WTC11 (cell line): ENCODE measurements at regions of chr14 and their contacts with region 1.

Region 1: GRCh38 chr14:54566410-54567223 is at the start of gene SAMD4A:
- DNase-seq: peak; percentile 65
- ATAC-seq: peak; percentile 13
- H3K4me3 Mint-ChIP-seq: peak within 1 kb of the TSS; percentile 94
- H3K27ac Mint-ChIP-seq: 0 out of 2 replicates have a peak within 1 kb of the TSS, but pooled peaks have one; percentile 70
- H3K4me1 Mint-ChIP-seq: peaks cover 21% of the 10 kb centered on the region
- H3K27me3 Mint-ChIP-seq: peaks cover 36% of the 10 kb centered on the region
- CTCF ChIP-seq: no peak
- total RNA-seq, gene SAMD4A: 5.2 to 6.0 TPM (median 5.3 TPM) in 3 replicates

Region 2: GRCh38 chr14:54509546-54510501 is 56.8 kb before region 1 on chr14 and contains the start of gene CGRRF1:
- CTCF ChIA-PET with region 1: interaction called, 21 read pairs
- POLR2A ChIA-PET with region 1: interaction called, 3 read pairs
- DNase-seq: peak; percentile 98
- ATAC-seq: peak; percentile 99
- H3K4me3 Mint-ChIP-seq: peak within 1 kb of the TSS; percentile 98
- H3K27ac Mint-ChIP-seq: peak within 1 kb of the TSS; percentile 94
- H3K4me1 Mint-ChIP-seq: peaks cover 13% of the 10 kb centered on the region
- H3K27me3 Mint-ChIP-seq: peaks cover 6% of the 10 kb centered on the region
- CTCF ChIP-seq: peak; percentile 77
- total RNA-seq, gene CGRRF1: 13.0 to 17.5 TPM (median 15.1 TPM) in 3 replicates

Region 3: DNA sequence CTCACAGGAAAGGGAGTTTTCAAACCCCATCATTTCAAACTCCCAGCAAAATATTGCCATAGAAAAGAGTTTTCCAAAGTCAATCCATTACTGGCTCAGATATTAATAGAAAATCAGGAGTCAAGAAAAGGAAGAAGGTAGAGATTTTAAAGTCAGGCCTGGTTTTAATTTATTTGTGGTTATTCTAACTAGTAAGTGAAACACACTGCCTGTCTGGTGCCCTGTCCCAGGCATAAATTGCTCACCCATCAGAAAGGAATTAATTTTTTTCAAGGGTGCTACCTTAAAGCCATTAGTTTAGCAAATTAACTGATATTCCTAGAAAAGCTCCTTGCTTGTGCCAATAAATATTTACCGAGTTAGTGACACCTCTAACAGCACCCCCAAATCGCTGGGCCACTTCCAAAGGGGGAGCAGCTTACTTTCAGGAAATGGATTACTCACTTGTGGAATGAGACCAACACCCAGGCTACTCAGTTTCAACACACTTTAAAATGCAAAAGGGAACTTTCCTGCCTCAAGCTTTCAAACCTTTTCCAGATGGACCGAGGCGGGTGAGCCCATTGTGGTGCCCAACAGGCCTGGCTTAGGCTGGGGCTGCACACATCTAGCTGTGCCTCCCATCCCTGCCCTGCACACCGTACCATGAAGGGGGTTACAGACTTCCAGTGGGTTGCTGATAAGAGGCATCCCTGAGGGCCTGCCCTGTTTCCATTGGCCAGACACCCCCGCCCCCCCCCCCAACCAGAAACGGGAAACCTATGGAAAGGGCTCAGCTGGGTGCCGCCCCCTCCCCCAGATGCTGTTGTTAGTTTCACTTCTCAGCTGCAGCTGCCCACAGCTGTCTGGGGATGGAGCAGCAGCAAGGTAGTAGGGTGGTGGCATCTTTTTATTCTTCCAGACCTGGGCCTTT is 117.5 kb after region 1 on chr14:
- CTCF ChIA-PET with region 1: interaction called, 4 read pairs
- POLR2A ChIA-PET with region 1: interaction called, 10 read pairs
- DNase-seq: peak; percentile 69
- ATAC-seq: peak; percentile 88
- H3K4me3 Mint-ChIP-seq: peak overlapping the region; percentile 50
- H3K27ac Mint-ChIP-seq: peak overlapping the region; percentile 81
- H3K4me1 Mint-ChIP-seq: peaks cover 36% of the 10 kb centered on the region
- H3K27me3 Mint-ChIP-seq: no peaks in the 10 kb centered on the region
- CTCF ChIP-seq: no peak

Region 4: DNA sequence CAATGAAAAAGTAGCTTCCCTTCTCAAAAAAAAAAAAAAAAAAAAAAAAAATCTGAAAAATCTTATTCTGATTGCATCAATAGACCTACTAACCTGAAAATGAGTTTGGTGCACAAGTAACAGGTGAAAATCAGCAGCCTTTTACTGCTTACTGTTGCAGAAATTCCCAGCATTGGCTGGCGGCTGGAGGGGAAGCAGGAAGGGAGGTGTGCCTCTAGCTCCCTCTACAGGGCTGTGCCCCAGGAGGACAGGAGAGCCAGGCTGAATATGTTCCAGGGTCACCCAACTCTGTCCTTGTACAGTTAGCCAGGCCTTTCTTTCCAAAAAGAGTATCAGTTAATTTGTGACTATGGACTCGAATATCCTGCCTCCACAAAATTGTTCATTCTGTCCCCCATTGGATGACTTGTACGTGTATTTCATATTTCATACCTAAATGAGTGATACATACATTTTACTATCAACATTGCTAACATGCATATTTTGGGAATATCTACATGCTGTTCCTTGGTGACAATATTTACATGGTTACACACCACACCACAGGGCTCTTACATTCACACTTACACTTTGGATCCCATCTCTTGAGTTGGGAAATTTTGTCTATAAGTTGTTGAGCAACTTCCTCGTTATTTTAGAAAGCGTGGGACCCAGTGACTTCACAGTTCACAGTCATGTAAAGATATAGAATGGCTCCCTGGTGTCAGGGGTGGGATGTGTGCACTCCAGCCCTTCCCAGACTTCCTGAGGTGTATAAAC is 125.1 kb after region 1 on chr14:
- CTCF ChIA-PET with region 1: interaction called, 37 read pairs
- POLR2A ChIA-PET with region 1: interaction called, 5 read pairs
- DNase-seq: peak; percentile 84
- ATAC-seq: peak; percentile 96
- H3K4me3 Mint-ChIP-seq: no peak overlapping the region
- H3K27ac Mint-ChIP-seq: no peak overlapping the region
- H3K4me1 Mint-ChIP-seq: peaks cover 7% of the 10 kb centered on the region
- H3K27me3 Mint-ChIP-seq: no peaks in the 10 kb centered on the region
- CTCF ChIP-seq: peak; percentile 58

Region 5: DNA sequence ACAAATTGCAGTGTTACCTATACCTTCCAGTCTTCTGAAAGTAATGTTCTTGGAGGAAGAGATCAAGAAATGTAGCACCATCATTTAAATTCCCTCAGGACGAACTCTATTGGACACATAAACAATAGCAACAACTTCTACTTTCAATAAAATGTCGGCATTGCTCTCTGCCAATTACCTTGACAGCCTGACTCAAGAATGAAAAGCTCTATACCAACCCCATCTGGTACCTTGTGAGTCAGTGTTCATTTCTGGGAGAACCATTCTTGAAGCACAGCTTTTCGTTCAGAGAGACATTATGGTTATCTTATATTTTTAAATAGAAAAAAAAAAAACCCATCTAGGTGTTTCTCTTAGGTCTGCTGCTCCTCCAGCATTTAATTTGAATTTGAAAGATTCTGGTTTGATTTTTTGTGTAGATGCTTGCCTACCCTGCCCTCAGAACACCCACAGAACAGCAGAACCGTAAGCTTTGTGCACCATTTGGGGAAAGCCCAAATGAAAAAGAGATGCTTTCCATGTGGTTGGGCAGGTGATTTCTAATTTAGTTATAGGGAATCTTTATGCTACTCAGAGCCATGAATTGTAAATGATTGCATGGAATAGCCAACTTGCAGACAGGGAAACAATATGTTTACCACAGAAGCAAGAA is 156.3 kb after region 1 on chr14:
- CTCF ChIA-PET with region 1: interaction called, 14 read pairs
- POLR2A ChIA-PET with region 1: interaction called, 5 read pairs
- DNase-seq: no peak
- ATAC-seq: peak; percentile 77
- H3K4me3 Mint-ChIP-seq: no peak overlapping the region
- H3K27ac Mint-ChIP-seq: no peak overlapping the region
- H3K4me1 Mint-ChIP-seq: peaks cover 8% of the 10 kb centered on the region
- H3K27me3 Mint-ChIP-seq: no peaks in the 10 kb centered on the region
- CTCF ChIP-seq: no peak

Region 6: GRCh38 chr14:54805521-54806322 is 239.1 kb after region 1 on chr14:
- CTCF ChIA-PET with region 1: interaction called, 18 read pairs
- POLR2A ChIA-PET with region 1: interaction called, 6 read pairs
- DNase-seq: peak; percentile 93
- ATAC-seq: peak; percentile 85
- H3K4me3 Mint-ChIP-seq: no peak overlapping the region
- H3K27ac Mint-ChIP-seq: no peak overlapping the region
- H3K4me1 Mint-ChIP-seq: peaks cover 21% of the 10 kb centered on the region
- H3K27me3 Mint-ChIP-seq: peaks cover 9% of the 10 kb centered on the region
- CTCF ChIP-seq: peak; percentile 95